WTC11 (cell line): ENCODE measurements at regions of chr11 and their contacts with region 1.

Region 1: GRCh38 chr11:8006349-8006977 is 19.3 kb downstream of the EIF3F start:
- DNase-seq: peak; percentile 75
- ATAC-seq: peak; percentile 96
- H3K4me3 Mint-ChIP-seq: no peak overlapping the region
- H3K27ac Mint-ChIP-seq: no peak overlapping the region
- H3K4me1 Mint-ChIP-seq: no peaks in the 10 kb centered on the region
- H3K27me3 Mint-ChIP-seq: no peaks in the 10 kb centered on the region; the same call in 1 of the 2 replicates
- CTCF ChIP-seq: peak; percentile 71

Region 2: GRCh38 chr11:7986768-7987559 is 19.5 kb before region 1 on chr11 and contains the start of gene EIF3F:
- CTCF ChIA-PET with region 1: interaction called, 10 read pairs
- POLR2A ChIA-PET with region 1: interaction called, 5 read pairs
- DNase-seq: peak; percentile 87
- ATAC-seq: peak; percentile 97
- H3K4me3 Mint-ChIP-seq: peak within 1 kb of the TSS; percentile 100
- H3K27ac Mint-ChIP-seq: peak within 1 kb of the TSS; percentile 97
- H3K4me1 Mint-ChIP-seq: peaks cover 22% of the 10 kb centered on the region
- H3K27me3 Mint-ChIP-seq: no peaks in the 10 kb centered on the region
- CTCF ChIP-seq: no peak; the same call in none of the 2 replicates
- total RNA-seq, gene EIF3F: 356 to 379 TPM (median 378 TPM) in 3 replicates

Region 3: GRCh38 chr11:8033305-8034105 is 27.0 kb after region 1 on chr11:
- CTCF ChIA-PET with region 1: interaction called, 73 read pairs
- POLR2A ChIA-PET with region 1: no interaction called
- DNase-seq: peak; percentile 78
- ATAC-seq: peak; percentile 92
- H3K4me3 Mint-ChIP-seq: peak overlapping the region; percentile 51
- H3K27ac Mint-ChIP-seq: no peak overlapping the region
- H3K4me1 Mint-ChIP-seq: peaks cover 15% of the 10 kb centered on the region
- H3K27me3 Mint-ChIP-seq: peaks cover 10% of the 10 kb centered on the region
- CTCF ChIP-seq: peak; percentile 29; the same call in 1 of the 2 replicates

Region 4: DNA sequence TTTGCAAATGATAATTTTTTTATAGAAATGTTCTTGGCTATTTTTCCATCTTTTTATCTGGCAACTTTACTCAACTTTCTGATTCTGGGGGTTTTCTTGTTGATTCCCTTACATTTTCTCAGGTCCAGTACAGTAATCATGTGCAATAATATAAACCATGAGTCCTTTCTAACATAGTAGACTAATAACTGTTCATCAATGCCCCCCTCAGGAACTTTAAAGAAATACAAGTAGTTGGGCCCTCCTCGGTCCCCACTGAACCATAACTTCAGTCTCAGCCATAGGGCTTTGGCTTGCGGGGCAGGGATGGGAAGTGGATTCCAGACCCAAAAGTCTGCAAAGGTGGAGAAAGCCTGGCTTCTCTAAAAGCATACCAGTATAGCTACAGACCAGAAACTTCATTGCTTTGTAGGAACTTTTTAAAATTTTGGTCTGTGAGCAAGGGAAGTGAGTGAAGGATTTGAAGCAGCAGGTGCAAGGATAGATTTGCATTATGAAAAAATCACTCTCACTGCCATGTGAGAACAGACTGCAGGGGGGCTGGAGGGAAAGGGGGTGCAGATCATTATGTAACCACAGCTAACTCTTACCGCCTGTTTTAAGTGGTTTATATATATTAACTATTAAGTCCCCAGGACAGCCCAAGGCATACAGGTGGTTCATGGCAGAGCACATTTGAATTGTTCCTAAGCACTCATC is 64.1 kb after region 1 on chr11:
- CTCF ChIA-PET with region 1: interaction called, 23 read pairs
- POLR2A ChIA-PET with region 1: no interaction called
- DNase-seq: no peak
- ATAC-seq: peak; percentile 40
- H3K4me3 Mint-ChIP-seq: no peak overlapping the region
- H3K27ac Mint-ChIP-seq: no peak overlapping the region
- H3K4me1 Mint-ChIP-seq: peaks cover 48% of the 10 kb centered on the region
- H3K27me3 Mint-ChIP-seq: peaks cover 12% of the 10 kb centered on the region; the same call in 1 of the 2 replicates
- CTCF ChIP-seq: no peak